Right ventricle myocardium superior (tissue), 1 donor: ENCODE measurements at regions of chr5 and their contacts with region 1.

Region 1: DNA sequence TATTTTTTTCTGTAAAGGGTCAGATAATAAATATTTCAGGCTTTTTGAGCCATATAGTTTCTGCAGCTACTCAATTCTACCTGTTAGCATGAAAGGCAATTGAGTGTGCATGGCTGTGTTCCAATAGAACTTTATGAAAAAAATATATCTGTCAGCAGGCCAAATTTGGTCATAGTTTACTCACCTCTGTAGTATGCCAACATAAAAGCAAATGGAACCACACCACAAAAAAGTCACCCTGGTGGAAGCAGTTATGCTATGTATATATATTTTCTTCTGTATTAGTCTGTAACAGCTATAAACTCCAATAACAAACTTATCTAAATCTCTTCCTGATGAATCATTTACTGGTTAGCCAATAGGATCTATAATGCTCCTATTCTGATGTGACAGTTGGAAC is 3.4 kb downstream of the SLC38A9 start:
- DNase-seq: no peak
- ATAC-seq: no peak

Region 2: DNA sequence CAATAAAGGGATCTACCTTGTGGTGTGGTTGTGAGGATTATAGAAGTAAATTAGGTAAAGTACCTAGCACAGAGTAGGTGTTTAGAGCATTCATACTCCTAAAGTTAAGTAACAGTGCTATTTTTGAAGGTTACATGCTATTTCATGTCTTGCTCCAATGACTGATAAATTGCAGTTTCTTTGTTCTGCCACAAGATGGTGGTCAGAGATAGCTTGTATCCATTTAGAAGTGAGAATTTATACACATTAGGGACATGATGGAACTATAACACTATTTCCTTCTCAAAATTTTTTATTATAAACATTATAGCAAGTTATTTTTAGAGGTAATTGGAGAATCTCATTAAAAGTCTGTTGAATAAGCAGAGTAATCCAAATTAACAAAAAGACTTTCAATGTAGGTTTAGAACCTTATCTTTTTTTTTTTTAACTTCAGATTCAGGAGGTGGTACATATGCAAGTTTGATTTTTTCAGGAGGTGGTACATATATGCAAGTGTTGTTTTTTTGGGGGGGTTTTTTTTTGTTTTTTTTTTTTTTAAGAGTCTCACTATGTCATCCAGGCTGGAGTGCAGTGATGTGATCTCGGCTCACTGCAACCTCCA is 383.8 kb before region 1 on chr5:
- intact Hi-C with region 1: loop called (anchors 10 kb)
- DNase-seq: no peak
- ATAC-seq: no peak

Region 3: DNA sequence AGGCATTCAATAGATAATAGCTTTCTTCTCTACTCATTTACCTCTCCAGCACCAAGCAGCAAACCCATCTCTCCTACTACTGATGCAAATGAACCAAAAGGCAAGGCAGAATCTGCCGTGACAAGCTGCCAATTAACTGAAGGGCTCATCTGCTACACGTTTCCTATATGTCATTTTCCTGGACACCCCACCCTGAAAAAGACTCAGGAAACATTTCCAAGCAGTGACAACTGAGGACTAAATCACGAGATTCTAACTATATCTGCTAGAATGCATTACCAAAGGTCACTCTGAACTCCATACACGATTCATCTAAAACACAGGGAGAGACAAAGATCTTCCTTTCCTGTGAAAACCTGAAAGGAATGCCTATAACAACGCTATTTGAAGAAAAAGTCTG is 186.9 kb before region 1 on chr5:
- intact Hi-C with region 1: no loop called
- DNase-seq: no peak
- ATAC-seq: peak; percentile 40

Region 4: DNA sequence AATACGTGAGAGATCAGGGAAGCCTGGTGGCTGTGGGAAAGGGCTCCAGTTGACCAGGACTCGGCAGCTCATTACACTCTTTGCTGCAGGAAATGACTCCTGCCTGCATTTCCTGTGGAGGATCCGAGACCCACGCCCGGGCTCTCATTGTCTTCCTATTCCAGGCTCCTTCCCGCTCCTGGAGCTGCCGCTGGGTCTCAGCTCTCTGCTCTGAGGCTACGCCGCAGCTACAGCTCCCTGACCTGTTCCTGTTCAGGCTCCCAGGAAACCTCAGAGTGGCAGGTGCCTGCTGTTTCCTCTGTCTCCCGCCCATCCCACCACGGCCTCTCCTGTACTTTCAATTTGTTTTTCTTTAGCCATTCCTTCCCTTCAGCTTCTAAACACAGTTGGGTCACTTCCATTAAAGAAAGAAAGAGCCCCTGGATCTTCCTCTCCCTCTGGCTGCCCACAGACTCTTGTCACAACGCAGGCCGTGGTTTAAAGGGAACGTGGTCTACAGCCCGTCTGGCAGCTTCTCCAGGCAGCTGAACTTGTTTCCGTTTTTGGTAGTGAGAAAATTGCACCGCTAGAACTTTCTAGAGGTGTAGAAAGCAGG is 214.5 kb after region 1 on chr5:
- intact Hi-C with region 1: no loop called
- DNase-seq: peak; percentile 53
- ATAC-seq: peak; percentile 58

Region 5: GRCh38 chr5:56155992-56156584 is 447.4 kb after region 1 on chr5:
- intact Hi-C with region 1: no loop called
- DNase-seq: peak; percentile 62
- ATAC-seq: peak; percentile 68